GM13977 (cell line): ENCODE measurements at regions of chr6 and their contacts with region 1.

Region 1: DNA sequence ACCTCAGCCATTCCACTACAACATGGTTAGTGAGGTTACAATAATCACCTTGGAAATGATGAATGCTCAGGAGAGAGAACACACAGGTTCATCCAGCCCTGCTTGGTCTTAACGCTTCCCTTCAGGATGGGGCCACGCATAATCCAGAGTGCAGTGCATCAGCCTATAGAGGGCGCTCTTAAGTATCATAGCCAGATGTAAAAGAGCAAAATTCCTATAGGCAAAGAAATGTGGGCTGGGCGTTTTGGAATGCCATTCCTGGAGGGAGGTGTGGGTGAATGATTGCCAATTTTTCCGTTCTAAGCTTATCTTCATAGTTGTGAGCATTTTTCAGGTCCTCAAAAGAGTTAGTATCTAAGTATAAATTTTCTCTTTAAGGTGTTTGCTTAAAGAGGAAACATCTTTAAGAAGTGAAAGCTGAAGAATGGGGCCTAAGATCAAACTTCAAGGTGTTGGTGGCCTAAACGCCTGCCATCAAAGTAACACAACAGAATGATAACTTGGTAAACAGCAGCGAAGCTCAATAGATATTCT is 1.8 kb downstream of the RIPOR2 start:
- DNase-seq: no peak
- CTCF ChIP-seq: peak; percentile 86

Region 2: DNA sequence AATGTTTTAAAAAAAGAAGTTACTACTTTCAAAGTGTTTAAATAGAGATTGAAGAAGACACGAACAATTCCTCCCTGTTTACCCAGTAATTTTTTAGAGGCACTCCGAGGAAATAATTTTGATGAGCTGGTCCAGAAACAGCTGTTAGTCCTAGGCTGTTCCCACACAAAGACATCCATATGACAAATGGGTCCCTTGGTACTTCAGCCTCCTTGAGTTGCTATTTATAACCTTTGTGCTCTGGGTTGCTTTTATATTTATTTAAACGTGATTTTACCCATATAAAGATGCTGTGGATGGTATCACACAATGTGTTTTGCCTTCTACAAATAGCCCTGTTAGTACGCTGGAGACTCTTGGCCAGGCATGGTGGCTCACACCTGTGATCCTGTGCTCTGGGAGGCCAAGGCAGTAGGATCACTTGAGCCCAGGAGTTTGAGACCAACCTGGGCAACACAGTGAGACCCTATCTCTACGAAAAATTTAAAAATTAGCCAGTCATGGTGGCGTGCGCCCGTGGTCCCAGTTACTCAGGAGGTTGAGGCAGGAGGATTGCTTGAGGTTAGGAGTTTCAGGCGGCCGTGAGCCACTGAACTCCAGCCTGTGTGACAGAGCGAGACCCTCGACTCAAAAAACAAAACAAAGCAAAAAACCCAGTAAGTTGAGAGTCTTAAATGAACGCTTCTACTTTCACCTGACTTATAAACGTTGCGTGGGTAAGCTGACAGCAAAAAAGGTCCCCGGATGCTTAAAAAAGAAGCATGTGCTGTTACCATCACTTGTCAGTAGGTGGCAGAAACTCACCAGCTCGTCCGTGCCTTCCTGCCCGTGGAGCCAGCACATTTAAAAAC is 78.3 kb before region 1 on chr6:
- in situ Hi-C with region 1: loop called (anchors 10 kb)
- DNase-seq: peak; percentile 75
- CTCF ChIP-seq: peak; percentile 80